ENCODE measurements at regions of chr17 and their contacts with region 1.

Region 1: DNA sequence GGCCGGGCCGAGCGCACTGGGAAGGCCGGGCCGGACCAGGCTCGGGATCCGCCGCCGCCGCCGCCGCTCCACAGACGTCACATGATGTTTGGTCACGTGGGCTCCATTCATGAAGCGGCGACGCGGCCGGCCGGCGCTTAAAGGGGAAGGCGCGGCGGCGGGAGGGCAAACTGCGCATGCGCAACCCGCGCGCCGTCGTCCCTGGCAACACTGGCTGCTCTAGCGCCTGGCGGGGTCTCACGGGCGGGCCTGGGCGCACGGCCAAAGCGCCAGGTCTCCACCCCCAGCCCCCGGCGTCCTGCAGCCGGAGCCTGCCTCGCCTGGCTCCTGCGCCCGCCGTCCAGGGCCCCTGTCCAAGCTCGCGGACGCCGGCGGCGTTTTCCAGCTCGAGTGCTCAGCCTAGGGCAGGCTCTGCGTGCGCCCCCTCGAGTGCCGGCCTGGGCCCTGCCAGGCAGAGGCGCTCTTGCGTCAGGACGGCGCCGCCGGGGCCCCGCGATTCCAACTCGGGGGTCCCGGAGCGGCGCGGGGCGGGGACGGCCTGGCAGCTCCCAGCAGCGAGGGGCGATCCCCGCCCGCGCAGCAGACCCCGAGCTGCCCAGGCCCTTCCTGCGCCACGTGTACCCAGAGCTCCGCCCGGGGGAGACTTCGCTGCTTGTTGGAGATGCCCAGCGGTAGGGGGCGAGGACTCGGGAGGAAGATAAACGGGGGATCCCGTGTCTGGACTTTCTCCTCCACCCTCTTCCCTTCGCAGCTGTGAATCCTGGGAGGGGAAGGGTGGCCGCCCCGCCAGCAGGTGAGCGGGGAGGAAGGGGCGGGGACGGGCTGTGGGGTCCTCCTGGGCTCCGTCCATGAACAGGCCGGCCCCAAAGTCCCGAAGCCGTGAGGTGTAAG is at the start of gene MAFG:
- DNase-seq: peak; percentile 92
- ATAC-seq: peak; percentile 76
- H3K4me3 Mint-ChIP-seq: peak within 1 kb of the TSS; percentile 85
- H3K27ac Mint-ChIP-seq: peak within 1 kb of the TSS; percentile 86
- H3K4me1 Mint-ChIP-seq: peaks cover 27% of the 10 kb centered on the region
- H3K27me3 Mint-ChIP-seq: no peaks in the 10 kb centered on the region
- total RNA-seq, gene MAFG: 14.0 to 16.5 TPM

Region 2: DNA sequence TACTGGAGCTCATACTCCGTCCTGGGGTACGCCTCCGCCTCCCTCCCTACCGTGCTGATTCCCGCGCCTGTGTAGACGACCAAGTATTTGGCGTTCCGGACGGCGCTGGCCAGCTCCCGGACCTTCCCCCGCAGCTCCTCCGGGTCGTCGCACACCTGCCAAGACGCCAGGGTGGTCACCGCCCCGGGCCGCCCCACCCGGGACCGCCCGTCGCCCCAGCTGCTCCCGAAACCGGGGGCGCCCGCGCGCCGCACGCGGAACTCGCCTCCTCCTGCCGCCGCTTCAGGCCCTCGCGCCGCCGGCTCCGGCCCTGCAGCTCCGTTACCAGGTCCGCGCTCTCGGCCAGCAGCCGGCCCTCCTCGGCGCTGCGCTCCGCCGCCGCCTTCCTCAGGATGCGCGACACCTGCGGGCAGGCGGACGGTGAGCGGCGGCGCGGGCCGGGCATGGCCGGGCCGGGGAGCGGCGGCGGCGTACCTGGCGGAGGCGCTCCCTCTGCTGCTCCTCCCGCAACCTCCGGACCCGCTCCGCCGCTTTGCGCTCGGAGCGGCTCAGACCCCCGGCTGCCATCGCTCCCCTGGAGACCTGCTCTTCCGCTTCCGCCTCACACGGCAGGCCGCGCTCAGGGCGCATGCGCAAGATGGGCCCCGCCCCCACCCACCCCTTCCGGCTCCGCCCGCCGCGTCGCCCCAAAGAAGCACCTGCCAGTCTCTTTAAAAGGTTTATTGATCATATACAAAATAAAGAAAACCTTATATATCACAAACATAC is 10.1 kb before region 1 on chr17 and contains the start of gene SIRT7:
- CTCF ChIA-PET with region 1: interaction called, 5 read pairs
- POLR2A ChIA-PET with region 1: interaction called, 19 read pairs
- DNase-seq: peak; percentile 86
- ATAC-seq: peak; percentile 86
- H3K4me3 Mint-ChIP-seq: peak within 1 kb of the TSS; percentile 82
- H3K27ac Mint-ChIP-seq: peak within 1 kb of the TSS; percentile 88
- H3K4me1 Mint-ChIP-seq: peaks cover 30% of the 10 kb centered on the region
- H3K27me3 Mint-ChIP-seq: no peaks in the 10 kb centered on the region
- total RNA-seq, gene SIRT7: 55.0 to 63.4 TPM

Region 3: GRCh38 chr17:81959362-81960129 is 31.6 kb after region 1 on chr17:
- CTCF ChIA-PET with region 1: interaction called, 10 read pairs
- POLR2A ChIA-PET with region 1: no interaction called
- DNase-seq: peak; percentile 80
- ATAC-seq: peak; percentile 97
- H3K4me3 Mint-ChIP-seq: no peak overlapping the region
- H3K27ac Mint-ChIP-seq: no peak overlapping the region
- H3K4me1 Mint-ChIP-seq: peaks cover 7% of the 10 kb centered on the region
- H3K27me3 Mint-ChIP-seq: peaks cover 40% of the 10 kb centered on the region

Region 4: GRCh38 chr17:82022981-82023374 is 95.1 kb after region 1 on chr17 and contains the start of gene LRRC45:
- CTCF ChIA-PET with region 1: interaction called, 13 read pairs
- POLR2A ChIA-PET with region 1: interaction called, 3 read pairs
- DNase-seq: peak; percentile 100
- ATAC-seq: peak; percentile 96
- H3K4me3 Mint-ChIP-seq: peak within 1 kb of the TSS; percentile 89
- H3K27ac Mint-ChIP-seq: peak within 1 kb of the TSS; percentile 83
- H3K4me1 Mint-ChIP-seq: peaks cover 43% of the 10 kb centered on the region
- H3K27me3 Mint-ChIP-seq: no peaks in the 10 kb centered on the region
- total RNA-seq, gene LRRC45: 58.3 to 58.9 TPM

Measured in activated CD8-positive, alpha-beta T cell treated with anti-CD3 and anti-CD28 coated beads, Interleukin-2, amount 10 ng/mL, durations not matched to agents 7 days and 5 days (primary cell).